Endothelial cell of umbilical vein (primary cell): ENCODE measurements at regions of chr2 and their contacts with region 1.

Region 1: DNA sequence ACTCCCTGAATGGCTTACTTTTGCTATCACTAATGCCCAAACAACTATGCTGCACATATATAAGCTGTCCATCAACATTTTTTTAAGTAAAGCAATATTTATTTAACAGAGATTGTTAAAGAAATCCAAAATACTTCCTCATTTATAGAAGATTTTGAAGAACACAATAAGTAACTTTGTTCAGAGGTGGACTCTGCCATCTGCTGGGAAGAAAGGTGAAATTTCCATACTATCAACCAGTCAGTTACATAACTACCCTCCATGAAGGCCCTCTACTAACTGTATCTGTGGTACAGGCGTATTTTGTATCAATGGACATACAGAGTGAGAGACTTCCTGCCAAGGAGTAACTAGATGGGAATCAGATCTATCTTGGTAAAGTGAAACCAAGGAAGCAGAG is 106.0 kb downstream of the DTNB start:
- DNase-seq: peak; percentile 67
- H3K4me3 ChIP-seq: no peak overlapping the region
- H3K27ac ChIP-seq: no peak overlapping the region
- H3K4me1 ChIP-seq: peaks cover 19% of the 10 kb centered on the region
- H3K27me3 ChIP-seq: no peaks in the 10 kb centered on the region
- CTCF ChIP-seq: peak; percentile 18 to 31
- POLR2A ChIP-seq: no peak

Region 2: GRCh38 chr2:25309402-25309801 is 258.0 kb before region 1 on chr2:
- CTCF ChIA-PET with region 1: interaction called, 5 read pairs
- POLR2A ChIA-PET with region 1: no interaction called
- dilution Hi-C with region 1: no loop called
- intact Hi-C with region 1: loop called (anchors 1 kb)
- DNase-seq: peak; percentile 57
- H3K4me3 ChIP-seq: no peak overlapping the region
- H3K27ac ChIP-seq: no peak overlapping the region
- H3K4me1 ChIP-seq: no peaks in the 10 kb centered on the region
- H3K27me3 ChIP-seq: no peaks in the 10 kb centered on the region
- CTCF ChIP-seq: peak; percentile 53 to 64
- POLR2A ChIP-seq: no peak

Region 3: DNA sequence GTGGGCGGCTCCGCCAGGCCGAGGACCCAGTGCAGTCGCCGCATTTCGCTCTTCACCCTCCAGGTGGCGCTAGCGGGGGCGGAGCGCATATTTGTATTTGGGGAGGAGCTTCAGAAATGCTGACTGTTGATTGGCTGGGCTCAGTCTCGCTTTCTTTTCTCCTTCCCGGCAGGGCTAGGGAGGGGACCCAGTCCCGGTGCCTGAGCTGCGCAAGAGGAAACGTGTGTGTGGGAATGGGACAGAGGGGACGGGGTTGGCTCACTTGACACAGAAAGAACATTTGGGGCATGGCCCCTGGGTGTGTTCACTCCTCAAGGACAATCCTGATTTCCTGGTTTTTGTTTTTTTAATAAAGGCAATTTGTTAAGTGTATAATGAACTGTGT is 205.4 kb before region 1 on chr2:
- CTCF ChIA-PET with region 1: interaction called, 22 read pairs
- POLR2A ChIA-PET with region 1: no interaction called
- dilution Hi-C with region 1: no loop called
- intact Hi-C with region 1: no loop called
- DNase-seq: peak; percentile 93
- H3K4me3 ChIP-seq: peak overlapping the region in 1 of 3 experiments; percentile 34
- H3K27ac ChIP-seq: no peak overlapping the region
- H3K4me1 ChIP-seq: peaks cover 4% of the 10 kb centered on the region
- H3K27me3 ChIP-seq: no peaks in the 10 kb centered on the region
- CTCF ChIP-seq: peak; percentile 96 to 97
- POLR2A ChIP-seq: peak; percentile 68